ENCODE measurements at regions of chr10 and their contacts with region 1.

Region 1: GRCh38 chr10:99598781-99599509 is 21.3 kb downstream of the SLC25A28 start:
- DNase-seq: no peak
- ATAC-seq: peak; percentile 45; the same call in 1 of the 2 replicates
- H3K4me3 ChIP-seq: no peak overlapping the region
- H3K27ac ChIP-seq: no peak overlapping the region
- H3K4me1 ChIP-seq: no peaks in the 10 kb centered on the region
- H3K27me3 ChIP-seq: no peaks in the 10 kb centered on the region
- CTCF ChIP-seq: no peak

Region 2: DNA sequence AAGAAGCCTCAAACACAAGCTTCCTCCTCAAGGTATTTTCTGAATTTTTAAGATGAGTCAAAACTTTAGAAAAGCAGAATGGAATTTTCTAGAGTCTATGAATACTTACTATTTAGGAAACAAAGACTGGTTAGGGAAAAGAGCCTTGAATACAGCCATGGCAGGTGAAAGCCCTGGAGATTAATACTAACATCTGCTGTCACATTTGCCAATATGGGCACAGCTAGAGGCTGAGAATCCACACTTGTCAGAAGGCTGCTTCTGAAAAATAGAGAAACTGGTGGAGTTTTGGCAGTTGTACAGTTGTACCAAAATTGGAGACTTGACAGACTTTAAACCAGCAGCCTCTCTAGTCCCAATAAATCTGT is 294.1 kb before region 1 on chr10:
- CTCF ChIA-PET with region 1: no interaction called
- POLR2A ChIA-PET with region 1: no interaction called
- in situ Hi-C with region 1: no loop called
- intact Hi-C with region 1: no loop called
- DNase-seq: no peak
- ATAC-seq: no peak
- H3K4me3 ChIP-seq: no peak overlapping the region
- H3K27ac ChIP-seq: no peak overlapping the region
- H3K4me1 ChIP-seq: no peaks in the 10 kb centered on the region
- H3K27me3 ChIP-seq: peaks cover 2% of the 10 kb centered on the region
- CTCF ChIP-seq: no peak

Region 3: GRCh38 chr10:99530108-99531025 is 68.6 kb before region 1 on chr10:
- CTCF ChIA-PET with region 1: no interaction called
- POLR2A ChIA-PET with region 1: no interaction called
- in situ Hi-C with region 1: no loop called
- intact Hi-C with region 1: no loop called
- DNase-seq: no peak
- ATAC-seq: no peak
- H3K4me3 ChIP-seq: no peak overlapping the region
- H3K27ac ChIP-seq: no peak overlapping the region
- H3K4me1 ChIP-seq: no peaks in the 10 kb centered on the region; the same call in 1 of the 2 replicates
- H3K27me3 ChIP-seq: peaks cover 10% of the 10 kb centered on the region
- CTCF ChIP-seq: no peak

Region 4: GRCh38 chr10:99685597-99685967 is 86.6 kb after region 1 on chr10:
- CTCF ChIA-PET with region 1: no interaction called
- POLR2A ChIA-PET with region 1: interaction called, 14 read pairs
- in situ Hi-C with region 1: no loop called
- intact Hi-C with region 1: no loop called
- DNase-seq: no peak
- ATAC-seq: no peak
- H3K4me3 ChIP-seq: no peak overlapping the region
- H3K27ac ChIP-seq: no peak overlapping the region
- H3K4me1 ChIP-seq: peaks cover 4% of the 10 kb centered on the region; the same call in 1 of the 2 replicates
- H3K27me3 ChIP-seq: no peaks in the 10 kb centered on the region
- CTCF ChIP-seq: no peak

Region 5: DNA sequence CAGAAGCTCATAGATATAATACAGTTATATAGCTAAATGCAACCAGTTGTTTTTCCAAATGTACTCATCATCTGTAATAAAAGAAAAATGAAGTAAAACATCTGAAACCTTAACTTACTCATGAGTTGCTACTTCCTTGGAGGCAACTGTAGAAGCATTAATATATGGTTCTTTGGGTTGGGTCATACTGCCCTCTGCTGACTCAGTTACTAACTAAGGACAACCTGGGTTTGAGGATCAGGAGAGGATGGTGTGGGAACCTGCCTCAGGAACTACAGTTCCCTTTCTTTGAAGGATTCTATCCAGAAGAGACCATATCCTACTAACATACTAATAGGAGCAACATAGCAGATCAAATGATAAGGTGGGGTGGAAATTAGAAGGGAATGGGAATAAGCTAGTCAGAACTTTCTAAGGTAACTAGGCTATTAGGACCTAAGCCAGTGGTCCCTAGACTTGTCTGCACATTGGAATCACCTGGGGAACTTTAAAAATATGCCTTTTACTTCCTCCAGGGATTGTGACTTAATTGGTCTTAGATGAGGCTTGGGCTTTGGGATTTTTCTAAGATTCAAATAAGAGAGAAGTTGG is 112.3 kb after region 1 on chr10:
- CTCF ChIA-PET with region 1: no interaction called
- POLR2A ChIA-PET with region 1: no interaction called
- in situ Hi-C with region 1: no loop called
- intact Hi-C with region 1: no loop called
- DNase-seq: peak; percentile 17
- ATAC-seq: peak; percentile 88
- H3K4me3 ChIP-seq: no peak overlapping the region
- H3K27ac ChIP-seq: no peak overlapping the region
- H3K4me1 ChIP-seq: no peaks in the 10 kb centered on the region; the same call in 1 of the 2 replicates
- H3K27me3 ChIP-seq: no peaks in the 10 kb centered on the region
- CTCF ChIP-seq: peak; percentile 75

Measured in Panc1 (cell line).